Cardiac septum (tissue), 1 donor: ENCODE measurements at regions of chr5 and their contacts with region 1.

Region 1: GRCh38 chr5:172006321-172007174 is at the start of gene FBXW11:
- DNase-seq: peak; percentile 98
- total RNA-seq, gene FBXW11: 94.4 TPM

Region 2: DNA sequence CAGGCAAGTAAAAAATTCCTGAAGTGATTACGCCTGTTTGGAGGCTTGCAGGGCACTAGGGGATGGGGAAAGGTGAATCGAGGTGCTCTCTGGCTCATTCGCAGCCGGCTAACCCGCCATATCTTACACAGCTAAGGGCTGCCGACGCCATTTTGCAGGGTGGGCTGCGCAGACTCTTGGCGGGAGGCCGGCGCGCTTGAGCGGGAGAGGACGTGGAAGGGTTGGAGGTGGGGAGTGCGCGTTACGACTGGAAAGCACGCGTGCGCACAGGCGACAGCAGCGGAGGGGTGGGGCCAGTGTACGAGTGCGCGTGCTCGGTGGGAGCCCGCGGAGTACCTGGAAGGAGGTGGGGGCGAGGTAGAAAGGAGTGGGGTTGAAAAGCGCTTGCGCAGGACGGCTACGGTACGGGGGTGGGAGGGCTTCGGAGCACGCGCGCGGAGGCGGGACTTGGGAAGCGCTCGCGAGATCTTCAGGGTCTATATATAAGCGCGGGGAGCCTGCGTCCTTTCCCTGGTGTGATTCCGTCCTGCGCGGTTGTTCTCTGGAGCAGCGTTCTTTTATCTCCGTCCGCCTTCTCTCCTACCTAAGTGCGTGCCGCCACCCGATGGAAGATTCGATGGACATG is 619.1 kb before region 1 on chr5 and contains the start of gene NPM1:
- intact Hi-C with region 1: loop called (anchors 5 kb)
- DNase-seq: peak; percentile 97
- total RNA-seq, gene NPM1: 412 TPM

Region 3: DNA sequence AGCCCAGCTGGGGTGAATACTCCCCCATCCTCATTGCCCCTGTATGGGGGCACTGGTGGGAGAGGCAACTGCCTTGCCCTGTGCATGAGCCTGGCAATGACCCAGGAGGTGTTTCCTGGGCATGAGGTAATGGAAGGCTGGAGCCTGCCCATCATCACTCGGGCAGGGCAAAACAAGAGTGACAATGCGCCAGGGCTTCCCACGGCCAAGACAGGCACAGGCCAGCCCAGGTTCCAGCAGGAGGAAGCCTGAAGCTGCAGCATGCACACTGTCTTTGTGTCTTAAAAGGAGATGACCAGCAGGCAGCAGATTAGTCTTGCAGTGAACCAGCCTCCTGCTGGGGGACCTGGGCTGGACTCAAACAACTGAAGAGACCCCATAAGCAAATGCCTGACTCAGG is 313.1 kb before region 1 on chr5:
- intact Hi-C with region 1: no loop called
- DNase-seq: no peak

Region 4: GRCh38 chr5:171961117-171961516 is 45.4 kb before region 1 on chr5:
- intact Hi-C with region 1: loop called (anchors 5 kb)
- DNase-seq: no peak

Region 5: GRCh38 chr5:172052450-172053236 is 46.1 kb after region 1 on chr5:
- intact Hi-C with region 1: loop called (anchors 2 kb)
- DNase-seq: peak; percentile 87